Lower leg skin (tissue), 4 donors: ENCODE measurements at regions of chr1 and their contacts with region 1.

Region 1: DNA sequence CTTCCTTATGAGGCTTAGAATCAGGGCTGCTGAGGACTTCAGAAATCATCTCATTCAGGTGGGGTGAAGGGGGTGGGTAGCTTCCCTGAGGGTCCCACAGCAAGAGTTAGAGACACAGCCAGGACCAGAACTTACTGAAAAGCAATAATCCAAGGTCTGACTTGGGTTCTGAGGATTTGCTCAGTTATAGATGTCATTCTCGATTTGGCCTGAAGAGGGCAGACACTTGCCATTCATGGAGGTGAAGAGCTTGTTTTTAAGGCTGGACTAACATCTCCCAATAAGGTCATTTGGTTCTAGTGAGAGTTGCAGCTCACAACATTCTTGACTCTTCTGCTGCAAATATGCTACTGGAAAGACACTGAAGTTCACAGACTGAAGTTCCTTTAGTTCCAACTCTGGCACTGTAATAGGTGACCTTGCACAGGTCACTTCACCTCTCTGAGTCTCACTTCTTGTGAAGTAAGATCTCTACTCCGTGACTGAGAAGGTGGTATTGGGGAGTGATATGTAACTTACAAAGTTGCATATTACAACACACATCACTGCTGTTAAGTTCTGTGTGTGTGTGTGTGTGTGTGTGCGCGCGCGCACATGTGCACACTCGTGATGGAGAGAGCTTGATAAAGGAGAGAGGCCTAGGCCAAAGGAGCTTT is 69.8 kb upstream of the DIRAS3 start:
- DNase-seq: peak in 1 of 2 donors; percentile 72
- H3K4me3 ChIP-seq: no peak overlapping the region
- CTCF ChIP-seq: peak in 1 of 3 donors; percentile 63
- POLR2A ChIP-seq: no peak

Region 2: DNA sequence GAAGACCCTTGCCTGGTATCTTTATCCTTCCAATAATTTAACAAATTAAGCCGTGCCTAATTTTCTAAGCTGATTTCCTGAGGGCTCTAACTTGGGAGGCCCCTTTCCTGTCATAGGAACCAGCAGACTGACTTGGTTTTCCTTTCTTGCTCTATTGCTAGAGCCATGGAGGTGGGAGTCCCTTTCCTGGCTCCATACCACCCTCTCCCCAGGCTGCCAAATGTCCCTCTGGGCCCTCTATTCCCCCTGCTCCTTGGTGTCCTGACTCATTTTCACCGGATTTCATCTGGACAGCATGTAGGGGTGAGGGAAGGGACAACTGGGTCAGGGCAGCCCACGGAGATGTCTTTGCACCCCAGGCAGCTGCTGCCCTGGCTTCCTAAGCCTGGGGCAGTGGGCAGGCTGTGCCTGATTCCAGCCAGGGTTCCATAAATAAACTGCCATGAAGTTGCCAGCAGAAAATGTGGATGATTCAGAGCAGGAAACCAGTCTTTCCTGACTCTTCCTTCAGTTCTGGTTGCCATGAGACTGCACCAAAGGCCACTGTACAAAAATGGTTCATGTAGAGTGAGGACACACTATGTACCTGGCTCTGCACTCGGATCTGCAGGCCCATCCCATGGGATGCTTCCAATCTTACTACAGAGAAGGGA is 652.1 kb before region 1 on chr1:
- intact Hi-C with region 1: no loop called
- DNase-seq: peak in 1 of 2 donors; percentile 28
- H3K4me3 ChIP-seq: no peak overlapping the region
- CTCF ChIP-seq: no peak
- POLR2A ChIP-seq: no peak

Region 3: GRCh38 chr1:67535474-67535873 is 584.8 kb before region 1 on chr1:
- intact Hi-C with region 1: loop called (anchors 10 kb)
- DNase-seq: peak; percentile 82 to 96
- H3K4me3 ChIP-seq: no peak overlapping the region
- CTCF ChIP-seq: peak in 2 of 3 donors; percentile 31 to 85
- POLR2A ChIP-seq: no peak

Region 4: GRCh38 chr1:68232354-68233148 is 112.3 kb after region 1 on chr1 and contains the start of gene WLS:
- intact Hi-C with region 1: loop called (anchors 5 kb)
- DNase-seq: peak; percentile 79 to 96
- H3K4me3 ChIP-seq: peak within 1 kb of the TSS; percentile 58
- CTCF ChIP-seq: no peak
- POLR2A ChIP-seq: no peak
- total RNA-seq, gene WLS: 37.8 to 56.3 (median 48.7) TPM

Region 5: DNA sequence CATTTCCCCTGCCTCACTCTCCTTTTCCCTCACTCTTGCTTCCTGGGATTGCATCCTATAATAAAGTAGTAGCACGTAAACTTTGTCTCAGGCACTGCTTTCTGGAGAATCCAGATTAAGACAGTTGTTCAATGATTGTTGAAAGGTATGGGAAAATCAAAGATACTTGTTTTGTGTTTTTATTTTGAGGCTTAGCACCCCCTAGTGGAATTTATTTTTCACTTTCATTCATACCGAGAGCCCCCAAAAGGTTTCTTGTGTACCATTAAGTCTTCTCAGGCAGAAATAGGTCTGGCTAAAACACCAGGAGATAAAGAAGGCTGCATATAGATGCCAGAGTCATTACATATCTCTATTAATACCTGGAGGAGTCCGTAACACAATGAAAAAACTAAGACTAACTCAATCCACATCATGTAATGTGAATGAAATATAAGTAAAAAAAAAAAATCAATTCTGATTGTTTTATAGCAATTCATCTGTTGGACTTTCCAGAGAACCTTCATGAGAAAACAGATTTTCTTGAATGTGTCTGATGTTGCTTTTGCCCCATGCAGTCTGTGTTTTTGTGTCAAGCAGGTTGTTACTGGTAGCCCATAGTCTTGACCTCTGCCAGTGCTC is 226.0 kb after region 1 on chr1:
- intact Hi-C with region 1: loop called (anchors 5 kb)
- DNase-seq: no peak
- H3K4me3 ChIP-seq: no peak overlapping the region
- CTCF ChIP-seq: no peak
- POLR2A ChIP-seq: no peak